Left cardiac atrium (tissue), 4 donors: ENCODE measurements at regions of chr6 and their contacts with region 1.

Region 1: GRCh38 chr6:142692942-142693341 is 252.0 kb downstream of the HIVEP2 start:
- DNase-seq: peak; percentile 69
- ATAC-seq: peak; percentile 71 to 84

Region 2: DNA sequence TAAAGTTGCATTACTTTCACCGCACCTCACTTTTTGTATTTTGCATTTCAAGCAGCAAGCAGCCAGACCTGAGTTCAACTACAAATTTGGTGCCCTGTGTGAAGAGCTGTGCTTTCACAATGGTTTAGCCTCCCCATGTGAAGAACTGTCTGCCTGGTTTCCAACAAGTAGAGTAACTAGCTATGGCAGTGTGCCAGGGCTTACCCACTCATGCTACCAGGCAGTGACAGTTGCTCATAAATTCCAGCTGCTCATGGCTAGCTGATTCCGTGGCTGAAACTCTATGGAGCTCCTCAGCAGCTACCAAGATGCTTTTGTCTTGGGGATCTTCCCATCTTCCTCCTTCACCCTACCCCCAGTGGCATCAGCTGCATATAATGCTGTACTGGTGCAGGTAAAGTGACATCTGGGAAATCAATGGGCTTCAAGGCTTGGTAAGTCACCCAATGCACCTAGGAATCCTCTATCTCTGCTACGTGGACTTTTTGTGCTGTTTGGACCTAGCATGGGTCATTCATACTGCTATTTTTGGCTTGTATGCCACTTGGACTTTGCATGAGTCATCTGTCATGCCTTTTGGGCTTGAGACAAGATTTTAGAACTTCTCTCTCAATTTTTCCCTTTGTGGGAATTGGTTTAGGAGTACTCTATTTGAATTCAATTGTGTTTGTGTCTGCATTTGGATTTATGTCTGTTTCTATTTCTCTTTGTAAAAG is 736.7 kb before region 1 on chr6:
- intact Hi-C with region 1: no loop called
- DNase-seq: peak; percentile 23
- ATAC-seq: peak in 1 of 2 donors; percentile 49

Region 3: DNA sequence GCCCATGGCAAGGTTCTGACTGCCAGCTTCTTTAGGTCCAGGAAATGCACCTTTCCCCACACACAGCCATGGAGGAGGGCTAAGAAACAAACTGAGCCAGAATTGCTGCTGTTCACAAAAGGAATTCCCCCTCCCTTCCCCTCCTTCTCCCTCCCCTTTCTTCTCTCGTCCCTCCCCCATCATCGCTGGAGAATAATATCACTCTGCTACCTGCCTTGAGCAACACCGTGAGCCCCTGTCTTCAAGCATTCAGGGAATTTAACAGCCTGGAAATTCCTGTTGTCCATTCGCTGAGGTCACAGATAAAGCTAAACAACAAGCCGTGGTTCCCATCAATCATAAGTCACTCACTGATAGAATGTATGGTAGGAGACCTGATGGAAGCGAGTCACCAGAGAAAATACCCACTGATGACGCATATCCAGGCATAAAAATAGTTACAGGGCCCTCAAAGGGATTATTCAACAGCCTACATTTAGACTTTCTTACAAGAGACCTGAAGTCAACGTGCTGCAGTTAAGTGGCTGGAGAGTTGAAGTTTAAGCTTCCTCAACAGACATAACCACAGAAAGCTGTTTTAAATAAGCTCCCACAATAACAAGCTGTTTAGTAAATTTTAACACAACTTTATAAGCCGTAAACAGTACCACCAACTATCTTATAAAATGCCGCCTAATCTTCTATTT is 192.4 kb after region 1 on chr6:
- intact Hi-C with region 1: loop called in 1 of 2 experiments (anchors 10 kb)
- DNase-seq: peak; percentile 35
- ATAC-seq: peak; percentile 89 to 91

Region 4: GRCh38 chr6:142952614-142953013 is 259.7 kb after region 1 on chr6:
- intact Hi-C with region 1: loop called in 1 of 2 experiments (anchors 5 kb)
- DNase-seq: no peak
- ATAC-seq: no peak

Region 5: DNA sequence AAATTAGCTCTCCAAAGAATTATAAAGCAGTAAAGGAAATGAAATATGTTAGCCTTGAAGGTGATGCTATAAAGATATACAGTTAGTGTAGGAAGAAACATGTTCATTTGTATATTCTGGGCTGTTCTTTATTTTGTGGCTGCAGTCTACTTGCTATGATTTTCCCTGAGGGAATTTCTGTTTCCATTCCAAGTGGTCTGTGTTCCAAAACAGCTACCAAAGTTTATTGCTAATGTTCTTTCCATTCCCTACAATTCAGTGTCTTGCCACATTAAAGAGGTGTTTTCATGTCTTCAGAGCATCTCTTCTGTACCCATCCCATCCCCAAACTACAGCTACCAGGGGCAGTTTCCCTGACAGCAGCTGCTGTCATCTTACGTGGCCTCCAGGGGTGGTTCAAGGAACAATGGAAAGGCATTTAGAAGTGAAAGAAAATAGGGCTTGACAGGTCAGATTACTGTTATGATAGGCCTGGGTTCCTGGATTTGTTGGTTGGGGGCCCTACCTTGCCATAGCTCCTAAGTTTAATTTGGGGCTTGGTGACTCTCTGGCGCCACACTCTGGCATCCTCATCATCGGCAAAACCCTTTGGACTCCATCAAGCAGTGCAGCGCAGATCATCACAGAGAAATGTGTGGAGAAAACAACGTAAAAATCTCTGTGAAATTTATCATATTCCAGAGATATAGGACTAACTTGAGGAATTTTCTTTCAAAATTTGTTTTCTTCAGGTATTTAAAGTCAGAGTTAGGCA is 333.9 kb after region 1 on chr6:
- intact Hi-C with region 1: loop called (anchors 1 to 2 kb)
- DNase-seq: peak; percentile 36
- ATAC-seq: peak; percentile 70

Region 6: GRCh38 chr6:143279385-143279784 is 586.4 kb after region 1 on chr6:
- intact Hi-C with region 1: loop called in 1 of 2 experiments (anchors 5 kb)
- DNase-seq: no peak
- ATAC-seq: peak; percentile 38 to 62

Region 7: DNA sequence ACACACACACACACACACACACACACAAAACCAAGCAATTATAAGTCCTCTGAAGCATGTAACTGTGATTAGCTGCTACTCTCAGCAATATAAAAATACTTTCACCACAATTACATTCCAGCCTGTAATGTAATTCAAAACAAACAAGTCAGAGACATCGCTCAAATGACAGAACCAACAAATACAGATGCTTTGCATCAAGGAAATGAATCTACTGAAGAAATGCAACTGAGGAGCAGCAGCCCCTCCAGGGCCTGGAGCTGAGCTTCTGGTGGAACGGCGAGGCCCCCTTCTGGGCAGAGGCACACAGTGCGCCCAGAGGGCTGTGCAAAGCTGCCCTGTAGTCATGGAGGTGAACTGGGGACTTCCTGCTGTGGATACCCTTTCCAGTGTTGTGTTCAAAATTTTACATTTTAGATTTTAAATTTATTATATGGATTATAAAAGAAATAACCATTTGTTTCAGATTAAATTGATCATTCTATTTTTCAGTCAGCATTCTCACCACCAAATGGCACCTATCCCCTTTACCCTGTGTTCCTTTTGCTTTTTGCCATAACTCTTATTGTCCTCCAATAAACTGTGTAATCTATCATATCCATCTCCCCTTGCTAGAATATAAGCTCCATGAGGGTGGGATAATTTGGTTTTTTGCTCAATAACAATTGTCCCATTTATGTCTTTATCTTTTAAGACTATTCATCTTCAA is 734.3 kb after region 1 on chr6:
- intact Hi-C with region 1: loop called (anchors 2 to 5 kb)
- DNase-seq: peak; percentile 73
- ATAC-seq: peak; percentile 97 to 99